Posterior vena cava (tissue), 2 donors: ENCODE measurements at regions of chr19 and their contacts with region 1.

Region 1: DNA sequence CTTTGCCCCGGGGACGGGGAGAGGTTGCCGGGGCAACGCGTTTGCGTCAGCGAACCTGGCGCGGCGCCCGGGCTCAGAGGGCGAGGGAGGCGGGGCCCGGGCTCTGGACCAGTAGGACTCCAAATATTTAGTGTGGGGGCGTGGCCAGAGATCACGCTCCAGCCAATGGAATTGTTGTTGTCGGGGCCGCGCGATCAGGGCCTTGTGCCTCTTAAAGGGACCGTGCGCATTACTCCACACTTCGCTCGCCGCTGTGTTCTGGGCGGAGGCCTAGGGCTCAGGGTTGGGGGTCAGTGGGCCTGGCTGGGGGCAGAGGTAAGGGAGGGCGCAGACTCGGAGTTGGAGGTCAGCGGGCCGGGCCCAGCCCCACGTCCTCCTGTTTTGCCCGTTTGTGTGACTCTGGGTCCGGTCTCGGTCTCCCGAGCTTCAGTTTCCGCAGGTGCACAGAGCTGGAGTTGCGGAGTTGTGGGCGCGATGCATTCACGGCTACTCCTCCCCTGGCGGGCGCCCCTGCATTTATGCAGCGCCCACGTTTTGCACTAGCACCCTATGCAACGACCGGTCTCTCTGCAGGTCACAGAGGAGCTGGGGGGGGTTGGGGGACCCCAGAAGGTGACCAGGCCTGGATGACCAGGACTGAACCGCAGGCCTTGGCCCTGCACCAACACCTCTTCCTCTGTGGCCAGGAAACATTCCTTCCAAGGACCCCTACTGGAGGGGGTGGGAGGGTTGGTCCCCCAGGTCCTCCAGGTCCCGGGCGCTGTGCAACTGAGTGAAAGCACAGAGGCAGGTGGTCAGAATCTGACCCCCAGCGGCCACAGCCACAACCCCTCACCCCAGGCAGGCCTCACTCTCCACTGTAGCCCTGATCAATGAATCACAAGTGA is 10.7 kb upstream of the MKNK2 start:
- DNase-seq: peak; percentile 100

Region 2: DNA sequence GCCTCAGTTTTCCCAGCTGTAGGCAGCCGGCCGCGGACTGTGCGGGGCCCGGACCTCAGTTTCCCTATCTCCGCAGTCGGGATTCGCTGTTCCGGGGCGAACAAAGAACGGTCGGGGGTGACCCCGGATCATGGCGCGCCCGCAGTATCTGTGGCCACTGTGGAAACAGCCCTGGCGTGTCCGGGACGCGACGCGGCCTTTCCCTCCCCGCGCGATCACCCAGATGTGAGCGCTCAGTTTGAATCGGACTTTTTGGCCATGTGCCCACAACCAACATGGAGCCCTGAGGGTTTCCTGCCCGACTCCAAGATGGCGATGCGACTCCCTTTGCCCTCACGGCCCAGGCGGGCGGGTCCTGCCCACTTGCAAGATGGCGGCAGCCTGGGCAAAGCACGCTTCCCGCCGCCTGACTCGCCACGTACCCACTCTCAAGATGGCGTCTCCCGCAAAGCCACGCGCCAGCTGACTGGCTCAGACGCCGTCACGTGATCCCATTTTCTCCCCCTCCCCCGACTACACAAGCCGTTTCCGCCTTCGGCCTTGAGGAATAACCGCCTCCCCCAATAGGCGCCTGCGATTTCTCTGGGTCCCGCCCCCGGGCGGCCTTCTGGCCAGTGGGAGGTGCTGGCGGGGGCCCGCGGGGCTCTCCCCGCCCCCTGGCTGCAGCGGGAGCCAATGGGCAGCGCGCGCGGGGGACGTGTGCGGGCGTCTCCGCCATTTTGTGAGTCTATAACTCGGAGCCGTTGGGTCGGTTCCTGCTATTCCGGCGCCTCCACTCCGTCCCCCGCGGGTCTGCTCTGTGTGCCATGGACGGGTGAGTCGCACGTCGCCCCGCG is 1264.8 kb before region 1 on chr19 and contains the start of gene PTBP1:
- intact Hi-C with region 1: no loop called
- DNase-seq: peak; percentile 100
- total RNA-seq, gene PTBP1: 151 to 168 TPM

Region 3: GRCh38 chr19:2021453-2022140 is 40.1 kb before region 1 on chr19:
- intact Hi-C with region 1: loop called in 1 of 2 experiments (anchors 5 kb)
- DNase-seq: no peak